Prostate gland (tissue), 2 donors: ENCODE measurements at regions of chr1 and their contacts with region 1.

Region 1: DNA sequence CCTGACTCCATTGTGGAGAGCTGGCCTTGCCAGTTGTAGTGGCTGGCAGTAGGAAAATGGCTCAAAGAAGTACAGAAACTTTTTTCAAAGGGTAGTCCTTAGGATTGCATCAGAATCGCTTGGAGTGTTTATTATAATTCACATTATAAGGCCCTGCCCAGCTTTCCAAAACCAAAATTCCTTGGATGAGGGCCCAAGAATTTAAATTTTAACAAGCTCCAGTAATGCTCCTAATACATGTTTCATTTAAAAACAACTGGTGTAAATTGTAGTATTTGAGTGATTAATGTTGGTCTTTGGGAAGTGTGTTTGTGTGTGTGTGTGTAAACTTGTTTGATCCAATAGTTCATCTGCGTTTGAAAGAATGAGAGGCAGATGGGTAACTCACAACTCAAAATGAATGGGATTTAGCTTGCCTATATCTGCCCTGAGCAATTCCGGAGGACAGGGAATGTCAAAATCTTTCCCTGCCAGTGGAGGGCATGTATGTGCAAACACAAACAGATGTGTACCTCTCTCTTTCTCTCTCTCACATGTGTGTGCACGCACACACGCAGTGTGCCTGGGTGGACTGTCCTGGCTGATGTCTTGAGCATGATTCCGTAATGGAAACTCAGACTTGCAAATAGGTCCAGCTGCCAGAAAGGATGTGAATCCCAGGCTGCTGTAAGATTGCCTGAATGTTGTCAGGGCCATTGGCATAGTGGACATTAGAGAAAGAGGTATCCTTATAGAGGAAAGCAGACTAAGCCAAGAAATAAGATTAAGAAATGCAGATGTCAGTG is 293.1 kb downstream of the LMX1A start:
- DNase-seq: no peak
- H3K4me3 ChIP-seq: no peak overlapping the region
- H3K27ac ChIP-seq: no peak overlapping the region
- H3K4me1 ChIP-seq: no peaks in the 10 kb centered on the region
- H3K27me3 ChIP-seq: no peaks in the 10 kb centered on the region
- CTCF ChIP-seq: no peak
- POLR2A ChIP-seq: no peak

Region 2: GRCh38 chr1:164953098-164953497 is 110.3 kb before region 1 on chr1:
- intact Hi-C with region 1: loop called (anchors 5 kb)
- DNase-seq: no peak
- H3K4me3 ChIP-seq: no peak overlapping the region
- H3K27ac ChIP-seq: no peak overlapping the region
- H3K4me1 ChIP-seq: no peaks in the 10 kb centered on the region
- H3K27me3 ChIP-seq: no peaks in the 10 kb centered on the region
- CTCF ChIP-seq: no peak
- POLR2A ChIP-seq: no peak

Region 3: DNA sequence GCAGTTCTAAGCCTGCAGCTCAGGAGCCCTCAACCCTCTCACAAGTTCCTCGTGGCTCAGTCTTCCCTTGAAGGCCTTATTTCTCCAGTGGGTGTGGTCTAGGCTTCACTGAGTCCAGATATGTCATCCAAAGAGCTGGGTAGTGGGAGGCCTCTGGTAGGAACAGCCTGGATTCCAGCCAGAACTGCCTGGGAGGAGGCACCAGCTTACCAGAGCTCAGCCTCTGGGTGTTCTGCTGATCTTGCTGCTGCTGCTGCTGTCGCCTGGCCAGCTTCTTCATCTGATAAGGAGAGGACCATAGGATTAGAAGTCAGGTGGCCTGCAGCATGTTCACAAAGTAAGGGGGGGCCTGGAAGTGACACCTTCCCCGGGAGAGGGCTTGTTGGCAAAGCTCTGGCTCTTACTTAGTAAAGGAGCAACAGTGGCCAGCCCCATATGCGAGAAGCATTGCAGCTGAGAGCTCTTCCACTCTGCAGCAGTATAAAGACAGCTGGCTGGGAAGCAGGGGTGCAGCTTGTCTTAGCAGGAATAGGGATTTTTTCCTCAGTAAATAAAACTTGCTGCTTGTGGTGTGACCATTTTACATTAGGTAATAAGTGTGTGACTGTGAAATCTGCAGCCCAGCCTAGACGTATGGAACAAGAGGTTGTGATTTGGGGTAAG is 144.6 kb after region 1 on chr1:
- intact Hi-C with region 1: no loop called
- DNase-seq: no peak
- H3K4me3 ChIP-seq: no peak overlapping the region
- H3K27ac ChIP-seq: no peak overlapping the region
- H3K4me1 ChIP-seq: no peaks in the 10 kb centered on the region
- H3K27me3 ChIP-seq: no peaks in the 10 kb centered on the region
- CTCF ChIP-seq: no peak
- POLR2A ChIP-seq: no peak